B cell (primary cell): ENCODE measurements at regions of chr12 and their contacts with region 1.

Region 1: GRCh38 chr12:53675651-53676453 is at the start of gene ATP5MC2:
- DNase-seq: peak; percentile 99
- ATAC-seq: peak; percentile 98
- H3K4me3 ChIP-seq: peak within 1 kb of the TSS; percentile 84 to 96 (median 91)
- H3K4me3 Mint-ChIP-seq: peak within 1 kb of the TSS; percentile 96
- H3K27ac ChIP-seq: peak within 1 kb of the TSS; percentile 69 to 76
- H3K27ac Mint-ChIP-seq: peak within 1 kb of the TSS; percentile 91
- H3K4me1 ChIP-seq: peaks cover 16 to 21% of the 10 kb centered on the region in 2 donors
- H3K4me1 Mint-ChIP-seq: peaks cover 29% of the 10 kb centered on the region
- H3K27me3 ChIP-seq: peaks cover 0 to 26% (median 16%) of the 10 kb centered on the region in 4 experiments
- H3K27me3 Mint-ChIP-seq: peaks cover 15% of the 10 kb centered on the region
- CTCF ChIP-seq: peak; percentile 99
- total RNA-seq, gene ATP5MC2: 205 and 212 TPM in 2 replicates

Region 2: DNA sequence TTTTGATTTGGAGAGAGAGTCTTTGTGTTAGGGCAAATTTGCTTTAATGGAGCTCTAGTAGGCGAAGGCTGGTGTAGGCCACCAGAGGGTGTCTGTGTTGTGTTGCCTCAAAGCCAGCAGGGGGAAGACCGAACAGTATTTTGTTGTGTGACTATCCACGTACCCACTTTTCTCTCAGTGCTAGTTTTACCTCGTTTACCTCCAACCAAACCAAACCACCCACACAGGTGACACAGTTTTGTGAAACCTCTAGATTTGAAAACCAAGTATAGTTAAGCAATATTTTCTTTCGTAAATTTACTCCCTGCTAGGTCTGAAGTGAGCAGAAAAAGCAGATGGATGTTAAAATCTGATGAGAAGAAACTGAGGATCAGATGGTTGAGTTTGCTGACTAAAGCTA is 132.3 kb before region 1 on chr12:
- CTCF ChIA-PET with region 1: interaction called, 58 read pairs
- POLR2A ChIA-PET with region 1: interaction called, 5 read pairs
- intact Hi-C with region 1: loop called (anchors 1 kb)
- DNase-seq: peak; percentile 61
- ATAC-seq: peak; percentile 81
- H3K4me3 ChIP-seq: no peak overlapping the region
- H3K4me3 Mint-ChIP-seq: no peak overlapping the region
- H3K27ac ChIP-seq: peak overlapping the region in 1 of 2 donors; percentile 44
- H3K27ac Mint-ChIP-seq: peak overlapping the region; percentile 5
- H3K4me1 ChIP-seq: no peaks in the 10 kb centered on the region
- H3K4me1 Mint-ChIP-seq: peaks cover 5% of the 10 kb centered on the region
- H3K27me3 ChIP-seq: no peaks in the 10 kb centered on the region
- H3K27me3 Mint-ChIP-seq: no peaks in the 10 kb centered on the region
- CTCF ChIP-seq: peak; percentile 71

Region 3: GRCh38 chr12:53599579-53599978 is 76.3 kb before region 1 on chr12:
- CTCF ChIA-PET with region 1: no interaction called
- POLR2A ChIA-PET with region 1: no interaction called
- intact Hi-C with region 1: loop called (anchors 1 kb)
- DNase-seq: no peak
- ATAC-seq: no peak
- H3K4me3 ChIP-seq: no peak overlapping the region
- H3K4me3 Mint-ChIP-seq: no peak overlapping the region
- H3K27ac ChIP-seq: no peak overlapping the region
- H3K27ac Mint-ChIP-seq: no peak overlapping the region
- H3K4me1 ChIP-seq: peaks cover 15 to 27% of the 10 kb centered on the region in 2 donors
- H3K4me1 Mint-ChIP-seq: peaks cover 39% of the 10 kb centered on the region
- H3K27me3 ChIP-seq: no peaks in the 10 kb centered on the region
- H3K27me3 Mint-ChIP-seq: no peaks in the 10 kb centered on the region
- CTCF ChIP-seq: peak; percentile 18

Region 4: DNA sequence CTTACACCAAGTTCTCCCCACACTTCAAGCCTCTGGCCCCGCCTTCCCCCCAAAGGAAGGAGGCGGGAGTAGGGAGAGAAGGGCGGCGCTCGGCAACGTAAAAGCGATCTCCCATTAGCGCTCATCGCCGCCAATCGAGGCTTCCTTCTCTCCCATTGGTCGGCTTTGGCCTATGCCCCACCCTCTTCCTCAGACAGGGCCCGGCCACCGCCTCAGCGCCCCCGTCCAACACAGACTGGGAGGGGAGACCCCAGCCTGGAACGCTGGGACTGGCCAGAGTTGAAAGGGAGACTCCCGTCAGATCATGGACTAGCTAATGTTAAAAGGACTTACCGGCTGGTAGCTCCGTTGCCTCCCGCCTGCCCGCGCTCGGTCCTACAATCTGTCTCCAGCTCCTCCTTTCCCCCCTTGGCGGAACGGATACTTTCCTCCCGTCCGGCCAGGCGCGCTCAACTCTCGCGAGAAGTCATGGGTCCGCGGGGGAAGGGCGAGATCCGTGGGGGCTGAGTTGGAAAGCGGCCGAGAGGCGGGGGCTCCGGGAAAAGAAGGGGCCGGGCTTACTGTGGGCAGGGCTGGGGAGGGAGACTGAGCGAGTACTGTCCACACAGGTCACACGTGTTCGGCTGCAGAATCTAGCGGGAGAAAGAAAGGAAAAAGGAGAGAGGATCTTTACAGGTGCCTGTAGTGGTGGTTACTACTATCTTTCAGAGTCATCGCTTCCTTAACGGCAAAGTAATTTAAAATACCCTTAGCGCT is 49.7 kb before region 1 on chr12 and contains the start of gene ATF7:
- CTCF ChIA-PET with region 1: interaction called, 13 read pairs
- POLR2A ChIA-PET with region 1: interaction called, 3 read pairs
- intact Hi-C with region 1: loop called (anchors 1 kb)
- DNase-seq: peak; percentile 99
- ATAC-seq: peak; percentile 93
- H3K4me3 ChIP-seq: peak within 1 kb of the TSS; percentile 60 to 91 (median 74)
- H3K4me3 Mint-ChIP-seq: peak within 1 kb of the TSS; percentile 91
- H3K27ac ChIP-seq: peak within 1 kb of the TSS; percentile 77 to 88
- H3K27ac Mint-ChIP-seq: peak within 1 kb of the TSS; percentile 98
- H3K4me1 ChIP-seq: peaks cover 24 to 29% of the 10 kb centered on the region in 2 donors
- H3K4me1 Mint-ChIP-seq: peaks cover 46% of the 10 kb centered on the region
- H3K27me3 ChIP-seq: no peaks in the 10 kb centered on the region
- H3K27me3 Mint-ChIP-seq: no peaks in the 10 kb centered on the region
- CTCF ChIP-seq: no peak
- total RNA-seq, gene ATF7: 42.2 and 42.9 TPM in 2 replicates